ENCODE measurements at regions of chr4 and their contacts with region 1.

Region 1: DNA sequence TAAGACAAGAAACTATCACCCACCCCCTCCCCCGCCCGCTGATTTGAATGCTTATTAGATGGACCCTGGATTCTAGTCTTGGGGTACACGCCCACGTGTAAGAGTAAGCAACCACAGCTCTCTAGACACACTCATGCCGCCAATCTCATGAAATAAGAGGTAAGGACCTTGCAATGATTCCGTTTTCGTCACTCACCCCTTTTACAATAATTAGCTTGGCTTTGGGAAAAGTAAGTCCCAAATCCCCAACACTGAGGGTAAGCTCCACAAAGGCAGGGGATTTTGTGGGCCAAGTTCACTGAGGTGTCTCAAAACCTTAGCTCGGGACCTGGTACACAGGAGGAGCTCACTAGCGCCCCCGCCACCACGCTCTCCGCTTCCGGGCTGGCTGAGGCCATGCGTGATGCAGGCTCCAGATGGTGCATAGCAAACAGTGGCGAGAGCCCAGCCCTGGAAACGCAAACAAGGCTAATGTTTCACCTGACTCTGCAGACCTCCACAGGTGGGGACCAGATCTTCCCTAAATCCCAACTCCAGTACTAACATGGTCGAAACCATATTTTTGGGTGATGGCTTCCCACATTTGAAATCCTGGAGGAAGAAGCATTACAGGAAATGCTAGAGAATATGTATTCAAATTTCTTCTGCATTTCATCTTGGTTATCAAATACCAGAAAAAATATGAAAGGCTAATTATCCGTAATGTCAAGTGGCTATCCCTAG is 4.1 kb downstream of the PLAC8 start:
- DNase-seq: peak; percentile 91 to 95 (median 95)
- H3K4me3 ChIP-seq: peak overlapping the region; percentile 51 to 84 (median 73)
- H3K27ac ChIP-seq: peak overlapping the region; percentile 90
- H3K4me1 ChIP-seq: peaks cover 15 to 59% (median 47%) of the 10 kb centered on the region in 4 experiments
- H3K27me3 ChIP-seq: no peaks in the 10 kb centered on the region

Region 2: DNA sequence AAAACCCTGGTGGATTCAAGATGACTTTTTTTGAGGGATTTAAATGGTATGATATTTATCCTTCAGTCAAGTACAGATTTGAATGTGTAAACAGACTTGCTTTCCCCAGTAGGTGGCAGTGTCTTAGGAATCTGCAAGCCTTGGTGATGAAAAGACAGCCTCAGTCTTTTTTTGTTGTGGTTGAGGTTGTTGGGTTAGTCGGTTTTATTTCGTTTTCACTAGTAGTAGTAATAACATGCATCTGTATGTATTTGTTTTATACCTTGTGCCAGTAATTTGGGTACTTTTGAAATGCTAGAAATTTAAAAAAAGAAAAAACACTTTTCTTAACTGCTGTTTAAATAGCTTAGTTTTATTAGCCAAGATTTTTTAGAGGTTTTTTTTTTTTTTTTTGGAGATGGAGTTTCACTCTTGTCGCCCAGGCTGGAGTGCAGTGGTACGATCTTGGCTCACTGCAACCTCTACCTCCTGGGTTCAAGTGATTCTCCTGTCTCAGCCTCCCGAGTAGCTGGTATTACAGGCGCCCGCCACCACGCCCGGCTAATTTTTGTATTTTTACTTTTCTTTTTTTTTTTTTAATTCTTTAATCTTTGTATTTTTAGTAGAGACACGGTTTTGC is 36.2 kb before region 1 on chr4:
- CTCF ChIA-PET with region 1: interaction called, 11 read pairs
- POLR2A ChIA-PET with region 1: no interaction called
- DNase-seq: peak; percentile 91 to 95 (median 95)
- H3K4me3 ChIP-seq: no peak overlapping the region
- H3K27ac ChIP-seq: no peak overlapping the region
- H3K4me1 ChIP-seq: peaks cover 3 to 15% (median 12%) of the 10 kb centered on the region in 4 experiments
- H3K27me3 ChIP-seq: no peaks in the 10 kb centered on the region

Region 3: GRCh38 chr4:83097018-83097417 is 13.4 kb before region 1 on chr4:
- CTCF ChIA-PET with region 1: interaction called, 14 read pairs
- POLR2A ChIA-PET with region 1: no interaction called
- DNase-seq: no peak
- H3K4me3 ChIP-seq: no peak overlapping the region
- H3K27ac ChIP-seq: no peak overlapping the region
- H3K4me1 ChIP-seq: no peaks in the 10 kb centered on the region
- H3K27me3 ChIP-seq: no peaks in the 10 kb centered on the region

Region 4: DNA sequence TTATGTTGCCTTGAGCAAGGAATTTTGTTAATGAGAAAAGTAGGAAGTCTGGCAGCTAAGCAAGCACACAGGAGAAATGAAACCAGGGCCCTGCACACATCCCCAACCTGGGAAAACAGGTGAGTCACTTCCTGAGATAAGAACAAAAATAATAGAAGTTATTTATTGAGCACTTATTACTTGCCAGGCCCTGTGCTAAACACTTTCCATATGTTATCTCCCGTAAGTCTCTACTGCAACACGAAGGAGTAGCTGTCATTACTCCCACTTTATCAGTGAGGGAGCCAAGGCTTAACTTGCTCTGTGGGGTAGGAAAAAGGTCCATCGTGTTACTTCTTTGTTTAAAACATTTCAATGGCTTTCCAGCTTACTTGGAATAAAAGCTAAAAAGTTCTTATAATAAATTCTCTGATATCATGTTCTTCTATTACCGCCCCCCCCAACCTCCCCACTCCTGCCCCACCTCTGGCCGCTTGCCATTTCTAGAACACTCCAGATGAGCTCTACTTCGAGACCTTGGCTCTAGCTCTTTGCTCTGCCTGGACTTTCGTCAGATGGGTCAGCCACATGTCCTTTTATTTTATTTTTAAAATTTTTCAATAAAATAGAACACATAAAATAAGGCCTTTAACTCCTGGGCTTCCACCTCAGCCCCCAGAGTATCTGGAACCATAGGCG is 40.4 kb after region 1 on chr4:
- CTCF ChIA-PET with region 1: interaction called, 14 read pairs
- POLR2A ChIA-PET with region 1: interaction called, 3 read pairs
- DNase-seq: no peak
- H3K4me3 ChIP-seq: no peak overlapping the region
- H3K27ac ChIP-seq: no peak overlapping the region
- H3K4me1 ChIP-seq: peaks cover 3 to 15% (median 8%) of the 10 kb centered on the region in 4 experiments
- H3K27me3 ChIP-seq: no peaks in the 10 kb centered on the region

Region 5: DNA sequence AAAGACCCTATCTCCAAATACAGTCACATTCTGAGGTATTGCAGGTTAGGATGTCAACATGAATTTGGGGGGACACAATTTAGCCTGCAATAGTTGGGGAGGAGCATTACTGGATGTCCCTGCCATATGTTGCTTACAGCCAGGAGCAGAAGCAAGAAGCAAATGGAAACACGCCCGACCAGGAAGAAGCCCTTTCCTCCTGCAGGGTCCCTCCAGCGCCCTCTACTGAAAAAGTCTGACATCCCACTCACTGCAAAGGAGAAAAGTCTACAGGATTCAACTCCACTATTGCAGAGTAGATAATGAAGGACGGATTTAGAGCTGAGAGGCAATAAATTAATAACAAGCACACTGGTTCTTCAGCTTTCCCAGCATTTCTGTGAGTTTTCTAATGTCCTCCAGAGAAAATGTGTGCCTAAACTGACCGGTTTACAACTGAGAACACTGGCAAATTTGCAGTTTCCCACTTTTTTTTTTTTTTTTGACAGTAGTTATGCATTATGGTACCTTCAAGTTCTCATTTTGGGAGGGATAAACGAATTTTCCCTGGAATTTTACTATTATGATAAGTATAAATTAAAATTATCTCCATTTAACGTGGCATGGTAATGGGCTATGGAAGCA is 142.5 kb after region 1 on chr4:
- CTCF ChIA-PET with region 1: interaction called, 10 read pairs
- POLR2A ChIA-PET with region 1: no interaction called
- DNase-seq: peak; percentile 80 to 90 (median 86)
- H3K4me3 ChIP-seq: no peak overlapping the region
- H3K27ac ChIP-seq: no peak overlapping the region
- H3K4me1 ChIP-seq: peaks cover 0 to 11% (median 5%) of the 10 kb centered on the region in 4 experiments
- H3K27me3 ChIP-seq: no peaks in the 10 kb centered on the region

Measured in common myeloid progenitor, CD34-positive (primary cell).